Activated naive CD4-positive, alpha-beta T cell treated with anti-CD3 and anti-CD28 coated beads, Interleukin-2, amount 10 ng/mL, durations not matched to agents 7 days and 5 days (primary cell): ENCODE measurements at regions of chr3 and their contacts with region 1.

Region 1: GRCh38 chr3:39288300-39288808 is 8.5 kb upstream of the CX3CR1 start:
- DNase-seq: peak; percentile 90
- H3K4me3 Mint-ChIP-seq: no peak overlapping the region
- H3K27ac Mint-ChIP-seq: no peak overlapping the region
- H3K4me1 Mint-ChIP-seq: peaks cover 39% of the 10 kb centered on the region
- H3K27me3 Mint-ChIP-seq: peaks cover 3% of the 10 kb centered on the region

Region 2: GRCh38 chr3:39101022-39101689 is 187.2 kb before region 1 on chr3:
- CTCF ChIA-PET with region 1: interaction called, 73 read pairs
- DNase-seq: peak; percentile 61
- H3K4me3 Mint-ChIP-seq: no peak overlapping the region
- H3K27ac Mint-ChIP-seq: no peak overlapping the region
- H3K4me1 Mint-ChIP-seq: peaks cover 27% of the 10 kb centered on the region
- H3K27me3 Mint-ChIP-seq: peaks cover 2% of the 10 kb centered on the region

Region 3: DNA sequence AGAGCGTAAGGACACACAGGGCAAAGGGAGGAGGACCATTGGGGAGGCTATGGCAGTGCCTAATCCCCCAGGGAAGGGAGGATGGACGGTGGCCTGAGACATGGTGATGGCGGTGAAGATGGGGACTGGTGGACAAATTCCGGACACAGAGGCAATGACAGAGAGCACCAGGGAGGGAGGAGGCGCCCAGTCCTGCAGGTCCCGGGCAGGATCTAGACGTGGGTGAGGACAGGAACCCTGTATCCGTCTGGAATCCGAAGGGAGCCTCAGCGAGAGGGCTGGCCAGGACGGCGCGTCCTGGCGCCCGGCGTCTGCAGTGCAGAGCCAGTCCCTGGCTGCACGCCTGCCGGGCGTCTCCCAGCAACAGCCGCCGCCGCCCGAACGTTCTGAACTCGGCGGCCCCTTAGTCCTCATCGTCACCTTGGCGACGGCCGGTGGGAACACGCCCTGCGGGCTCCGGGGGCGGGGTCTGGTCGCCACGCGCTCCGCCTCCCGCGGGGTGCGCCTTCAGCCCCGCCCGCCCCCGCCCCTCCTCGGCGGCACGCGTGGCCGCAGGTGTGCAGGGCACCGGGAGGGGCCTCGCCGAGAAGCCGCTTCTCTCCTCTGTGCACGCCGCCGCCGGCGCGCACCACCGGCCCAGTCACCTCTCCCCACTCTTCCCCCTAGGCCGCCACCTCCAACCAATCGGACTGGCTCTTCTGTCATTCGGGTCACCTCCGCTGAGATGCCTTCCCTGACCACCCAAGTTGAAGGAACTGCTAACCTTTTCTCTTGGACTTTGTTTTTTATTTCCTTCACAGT is 107.6 kb before region 1 on chr3:
- CTCF ChIA-PET with region 1: interaction called, 358 read pairs
- DNase-seq: peak; percentile 92
- H3K4me3 Mint-ChIP-seq: peak overlapping the region; percentile 75
- H3K27ac Mint-ChIP-seq: peak overlapping the region; percentile 31
- H3K4me1 Mint-ChIP-seq: peaks cover 55% of the 10 kb centered on the region
- H3K27me3 Mint-ChIP-seq: no peaks in the 10 kb centered on the region

Region 4: DNA sequence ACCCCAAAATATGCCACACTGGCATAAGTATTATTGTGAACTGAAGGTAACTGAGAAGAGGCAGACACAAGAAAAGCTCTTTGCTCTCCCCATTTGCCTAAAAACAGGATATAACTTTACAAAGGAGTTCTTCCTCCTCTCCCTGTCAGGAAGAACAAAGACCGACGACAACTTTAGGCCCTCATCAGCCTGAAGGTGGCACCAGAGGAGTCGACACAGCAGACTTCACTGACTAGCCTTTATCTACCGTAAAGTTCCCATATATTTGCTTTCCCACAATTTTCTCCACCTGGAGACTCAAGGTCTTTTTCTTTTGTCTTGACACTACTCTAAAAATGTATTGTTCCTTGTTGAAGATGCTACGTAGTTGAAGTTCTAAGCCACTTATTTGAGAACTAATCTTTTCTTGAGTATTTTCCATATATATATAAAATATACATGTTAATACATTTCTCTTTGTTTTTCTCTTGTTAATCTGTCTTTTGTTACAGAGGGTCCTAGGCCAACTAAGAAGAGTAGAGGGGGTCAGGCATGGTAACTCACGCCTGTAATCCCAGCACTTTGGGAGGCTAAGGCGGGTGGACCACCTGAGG is 79.8 kb before region 1 on chr3:
- CTCF ChIA-PET with region 1: interaction called, 33 read pairs
- DNase-seq: peak; percentile 58
- H3K4me3 Mint-ChIP-seq: no peak overlapping the region
- H3K27ac Mint-ChIP-seq: no peak overlapping the region
- H3K4me1 Mint-ChIP-seq: peaks cover 13% of the 10 kb centered on the region
- H3K27me3 Mint-ChIP-seq: peaks cover 39% of the 10 kb centered on the region

Region 5: GRCh38 chr3:39267631-39268548 is 20.5 kb before region 1 on chr3:
- CTCF ChIA-PET with region 1: interaction called, 30 read pairs
- DNase-seq: peak; percentile 79
- H3K4me3 Mint-ChIP-seq: peak overlapping the region; percentile 22
- H3K27ac Mint-ChIP-seq: peak overlapping the region; percentile 86
- H3K4me1 Mint-ChIP-seq: peaks cover 36% of the 10 kb centered on the region
- H3K27me3 Mint-ChIP-seq: peaks cover 50% of the 10 kb centered on the region

Region 6: GRCh38 chr3:39361252-39361927 is 73.0 kb after region 1 on chr3:
- CTCF ChIA-PET with region 1: interaction called, 10 read pairs
- DNase-seq: peak; percentile 74
- H3K4me3 Mint-ChIP-seq: peak overlapping the region; percentile 42
- H3K27ac Mint-ChIP-seq: peak overlapping the region; percentile 86
- H3K4me1 Mint-ChIP-seq: peaks cover 64% of the 10 kb centered on the region
- H3K27me3 Mint-ChIP-seq: peaks cover 31% of the 10 kb centered on the region

Region 7: GRCh38 chr3:39434574-39434973 is 146.2 kb after region 1 on chr3:
- CTCF ChIA-PET with region 1: no interaction called
- DNase-seq: no peak
- H3K4me3 Mint-ChIP-seq: no peak overlapping the region
- H3K27ac Mint-ChIP-seq: no peak overlapping the region
- H3K4me1 Mint-ChIP-seq: no peaks in the 10 kb centered on the region
- H3K27me3 Mint-ChIP-seq: peaks cover 8% of the 10 kb centered on the region

Region 8: DNA sequence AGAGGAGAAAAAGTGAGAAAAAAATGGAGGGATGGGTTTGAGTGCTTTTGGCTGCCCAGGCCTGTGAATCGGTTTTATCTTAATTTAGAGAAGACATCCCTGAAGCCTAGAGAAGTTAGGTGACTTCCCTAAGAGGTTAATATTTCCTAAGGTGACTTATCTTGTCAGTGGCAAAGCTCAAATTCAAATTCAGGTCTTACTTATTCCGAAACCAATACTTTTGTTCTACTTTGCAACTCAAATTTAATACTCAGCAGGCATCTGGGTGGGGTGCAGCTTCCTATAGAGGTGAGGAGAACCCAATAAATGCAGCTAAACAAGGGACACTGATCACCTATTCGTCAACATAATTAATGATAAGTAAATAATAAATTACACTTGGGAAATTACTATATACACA is 466.2 kb after region 1 on chr3:
- CTCF ChIA-PET with region 1: no interaction called
- DNase-seq: no peak
- H3K4me3 Mint-ChIP-seq: no peak overlapping the region
- H3K27ac Mint-ChIP-seq: no peak overlapping the region
- H3K4me1 Mint-ChIP-seq: no peaks in the 10 kb centered on the region
- H3K27me3 Mint-ChIP-seq: no peaks in the 10 kb centered on the region